ENCODE measurements at regions of chr17 and their contacts with region 1.

Region 1: DNA sequence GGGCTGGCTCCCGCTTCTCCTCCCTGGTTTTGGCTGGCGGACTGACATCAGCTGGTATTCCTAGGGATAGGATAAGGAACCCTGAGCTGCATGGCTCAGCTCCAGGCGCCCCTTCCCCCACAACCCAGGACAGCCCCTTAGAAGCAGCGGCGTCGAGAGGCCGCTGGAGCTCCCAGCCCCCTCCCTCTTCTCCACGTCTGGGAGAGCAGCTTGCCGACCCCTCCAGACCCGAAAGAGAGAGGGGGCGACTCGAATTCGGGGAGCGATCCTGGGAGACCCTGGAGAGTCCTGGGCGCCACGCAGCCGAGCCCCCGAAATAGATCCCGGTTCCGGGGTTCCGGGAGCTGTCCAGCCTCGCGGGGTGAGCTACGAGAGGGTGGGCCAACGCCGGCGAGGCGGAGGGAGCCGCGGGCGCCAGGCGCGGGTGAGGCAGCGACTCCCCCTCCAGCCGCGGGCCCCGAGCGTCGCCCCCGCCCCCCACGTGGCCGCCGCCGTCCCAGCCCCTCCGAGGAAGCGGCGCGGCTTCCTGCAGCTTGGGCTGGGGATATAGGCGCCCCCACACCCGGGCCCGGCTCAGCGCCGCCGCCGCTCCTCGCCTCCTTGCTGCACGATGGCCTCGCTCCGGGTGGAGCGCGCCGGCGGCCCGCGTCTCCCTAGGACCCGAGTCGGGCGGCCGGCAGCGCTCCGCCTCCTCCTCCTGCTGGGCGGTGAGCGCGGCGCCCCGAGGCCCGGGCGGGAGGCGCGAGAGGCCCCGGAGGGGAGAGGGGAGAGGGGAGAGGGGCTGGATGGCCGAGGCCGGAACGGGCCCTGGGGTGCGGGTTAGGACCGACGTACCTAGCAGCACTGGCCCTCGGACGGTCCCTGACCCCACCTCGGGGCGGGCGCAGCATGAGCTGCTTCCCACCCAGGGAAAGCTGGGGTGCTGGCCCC is at the start of gene RAMP2:
- DNase-seq: no peak
- H3K4me3 ChIP-seq: peak within 1 kb of the TSS; percentile 39 to 72 (median 57)
- H3K27ac ChIP-seq: peak within 1 kb of the TSS in 43 of 59 donors; percentile 2 to 77 (median 47)
- H3K27me3 ChIP-seq: peaks cover 0 to 21% (median 0%) of the 10 kb centered on the region in 45 donors
- CTCF ChIP-seq: peak in 1 of 56 donors; percentile 10
- total RNA-seq, gene RAMP2: 2.8 to 31.2 (median 12.5) TPM

Region 2: DNA sequence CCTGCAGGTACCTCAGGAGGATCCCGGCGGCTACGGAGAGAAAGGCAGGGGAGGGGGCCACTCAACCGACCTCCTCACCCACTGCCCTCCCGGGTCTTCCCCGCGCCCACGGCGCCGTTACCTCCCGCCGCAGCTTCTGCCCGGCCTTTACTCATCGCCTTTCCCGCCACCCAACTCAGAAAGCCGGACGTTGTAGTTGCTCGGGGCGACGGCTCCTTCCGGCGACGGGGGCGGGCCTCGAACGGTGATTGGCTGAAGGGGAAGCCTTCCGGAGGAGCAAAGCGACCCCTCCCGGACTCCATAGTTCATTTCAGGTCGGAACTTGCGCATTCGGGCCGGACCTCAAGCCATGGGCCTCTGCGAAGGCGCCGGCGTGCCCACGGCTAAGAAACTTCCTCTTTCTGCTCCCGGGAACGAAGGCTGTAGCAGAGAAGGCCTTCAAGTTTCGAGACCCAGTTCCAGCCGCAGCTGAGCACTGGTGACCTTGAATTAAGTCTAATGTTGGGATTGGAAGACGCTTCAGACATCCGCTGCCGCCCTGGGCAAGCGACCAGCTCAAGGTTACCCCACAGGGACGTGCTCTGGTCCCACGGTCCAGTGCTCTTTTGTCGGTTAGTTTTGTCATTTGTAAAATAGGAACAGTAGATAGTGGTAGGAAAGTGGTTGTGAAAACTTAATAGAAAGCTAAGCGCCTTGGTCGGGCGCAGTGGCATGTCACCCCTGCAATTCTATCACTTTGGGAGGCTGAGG is 183.2 kb before region 1 on chr17 and contains the start of gene PSMC3IP:
- intact Hi-C with region 1: loop called in 1 of 2 experiments (anchors 5 kb)
- DNase-seq: peak; percentile 89 to 97 (median 96)
- H3K4me3 ChIP-seq: peak within 1 kb of the TSS; percentile 56 to 99 (median 82)
- H3K27ac ChIP-seq: peak within 1 kb of the TSS in 58 of 59 donors; percentile 6 to 95 (median 87)
- H3K27me3 ChIP-seq: no peaks in the 10 kb centered on the region
- CTCF ChIP-seq: peak in 54 of 56 donors; percentile 13 to 71 (median 46)
- total RNA-seq, gene PSMC3IP: 1.4 to 11.5 (median 5.9) TPM

Region 3: GRCh38 chr17:42704837-42705494 is 56.0 kb before region 1 on chr17:
- intact Hi-C with region 1: no loop called
- DNase-seq: no peak
- H3K4me3 ChIP-seq: no peak overlapping the region
- H3K27ac ChIP-seq: no peak overlapping the region
- H3K27me3 ChIP-seq: no peaks in the 10 kb centered on the region
- CTCF ChIP-seq: no peak

Region 4: DNA sequence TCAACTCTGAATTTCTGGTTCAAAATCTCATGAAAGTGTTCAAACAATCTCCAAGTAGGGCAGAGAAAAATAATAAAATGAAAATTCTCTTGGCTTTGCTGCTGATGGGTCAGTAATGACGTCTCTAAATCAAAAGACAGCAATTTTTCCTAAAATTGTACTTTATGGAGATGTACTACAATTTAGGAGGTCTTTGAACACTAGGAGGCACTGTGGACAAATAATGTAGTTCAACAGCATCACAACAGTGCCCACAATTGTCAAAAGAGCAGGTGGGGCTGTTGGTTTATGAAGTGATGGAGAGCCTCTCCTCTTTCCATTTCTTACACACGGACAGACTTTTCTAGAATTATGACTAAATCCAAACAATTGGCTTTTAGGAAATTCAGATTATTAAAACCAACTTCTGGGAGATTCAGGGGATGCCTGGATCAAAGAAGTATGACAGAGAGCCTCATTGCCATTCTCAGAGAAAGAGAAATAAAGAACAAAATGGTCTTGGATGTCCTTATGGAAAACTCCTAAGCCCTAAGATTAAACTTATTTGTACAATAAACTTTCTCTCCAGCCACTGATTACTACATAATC is 39.8 kb before region 1 on chr17:
- intact Hi-C with region 1: loop called (anchors 2 kb)
- DNase-seq: peak in 2 of 10 donors; percentile 44 to 59
- H3K4me3 ChIP-seq: peak overlapping the region in 2 of 59 donors; percentile 9 to 13
- H3K27ac ChIP-seq: peak overlapping the region in 41 of 59 donors; percentile 4 to 83 (median 59)
- H3K27me3 ChIP-seq: no peaks in the 10 kb centered on the region
- CTCF ChIP-seq: peak; percentile 60 to 91 (median 78)

Region 5: GRCh38 chr17:42787266-42787665 is 26.3 kb after region 1 on chr17:
- intact Hi-C with region 1: no loop called
- DNase-seq: no peak
- H3K4me3 ChIP-seq: no peak overlapping the region
- H3K27ac ChIP-seq: no peak overlapping the region
- H3K27me3 ChIP-seq: peaks cover 0 to 57% (median 39%) of the 10 kb centered on the region in 45 donors
- CTCF ChIP-seq: no peak

Region 6: DNA sequence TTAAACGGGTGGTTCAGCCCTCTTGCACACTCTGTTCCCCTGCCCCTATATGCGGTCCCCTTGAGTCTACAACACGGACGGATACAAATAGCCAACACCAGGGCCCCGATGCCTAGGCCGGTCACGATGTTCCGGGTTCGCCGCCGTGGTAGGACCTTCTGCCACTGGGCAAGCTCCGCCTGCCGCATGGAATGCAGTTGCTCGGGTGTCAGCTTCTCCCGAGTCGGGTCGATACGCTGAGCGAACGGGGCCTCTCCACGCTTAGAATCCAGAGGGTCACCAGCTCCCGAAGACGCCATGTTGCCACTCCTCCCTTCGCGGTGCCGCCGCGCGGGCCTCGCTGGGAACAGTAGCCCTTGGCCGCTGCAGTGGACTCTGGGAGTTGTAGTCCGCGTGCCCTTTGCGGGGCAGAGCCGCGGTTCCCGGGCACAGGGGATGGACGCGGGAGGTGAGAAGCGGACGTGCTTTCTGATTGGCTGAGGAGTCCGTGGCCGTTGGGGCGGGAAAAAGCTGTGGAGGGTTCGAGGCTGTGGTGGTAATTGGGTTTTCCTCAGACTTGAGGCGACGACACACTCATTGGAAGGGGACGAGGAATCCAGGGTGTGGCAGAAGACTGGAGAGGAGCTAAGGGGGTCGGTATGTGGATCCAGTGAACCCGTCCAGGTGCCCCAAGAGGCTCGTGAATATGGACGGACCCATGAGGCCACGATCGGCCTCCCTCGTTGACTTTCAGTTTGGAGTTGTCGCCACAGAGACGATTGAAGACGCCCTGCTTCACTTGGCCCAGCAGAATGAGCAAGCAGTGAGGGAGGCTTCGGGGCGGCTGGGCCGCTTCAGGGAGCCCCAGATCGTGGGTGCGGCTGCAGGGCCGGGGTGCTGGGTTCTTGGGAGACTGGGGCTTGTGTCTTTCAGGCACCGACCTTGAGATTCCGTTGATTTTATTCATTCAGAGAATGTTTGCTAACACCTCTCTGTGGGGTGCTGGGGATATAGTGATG is 37.8 kb after region 1 on chr17 and contains the starts of genes CNTD1 and COA3:
- intact Hi-C with region 1: no loop called
- DNase-seq: peak; percentile 75 to 92 (median 88)
- H3K4me3 ChIP-seq: peak within 1 kb of the TSS; percentile 68 to 99 (median 92)
- H3K27ac ChIP-seq: peak within 1 kb of the TSS in 53 of 59 donors; percentile 9 to 89 (median 70)
- H3K27me3 ChIP-seq: no peaks in the 10 kb centered on the region
- CTCF ChIP-seq: peak in 25 of 56 donors; percentile 12 to 46 (median 26)
- total RNA-seq, gene CNTD1: 0.47 to 5.7 (median 1.9) TPM
- total RNA-seq, gene COA3: 45.3 to 97.2 (median 69.2) TPM

Measured in dorsolateral prefrontal cortex (tissue), 120 donors.